ENCODE measurements at regions of chrX and their contacts with region 1.

Region 1: DNA sequence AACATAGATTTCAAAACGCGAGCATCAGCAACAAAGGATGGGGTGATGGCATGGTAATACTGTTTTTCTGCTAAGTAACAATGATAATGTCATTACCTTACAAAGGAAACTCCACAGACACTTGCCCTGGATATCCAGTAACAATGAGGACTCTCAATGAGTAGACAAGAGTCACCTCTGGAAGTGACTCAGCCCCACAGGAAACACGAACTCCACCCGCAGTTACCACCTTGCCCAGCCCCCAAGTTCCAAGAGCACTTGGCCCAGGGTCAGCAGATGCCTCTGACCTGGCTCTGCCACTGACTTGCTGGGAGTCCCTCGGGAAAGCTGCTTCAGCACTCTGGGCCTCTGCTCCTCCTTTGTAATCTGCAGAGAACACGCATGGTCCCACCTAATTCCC is 110.3 kb upstream of the MAP3K15 start:
- DNase-seq: peak; percentile 46 to 65
- H3K4me3 ChIP-seq: no peak overlapping the region
- H3K27ac ChIP-seq: peak overlapping the region; percentile 89
- H3K4me1 ChIP-seq: peaks cover 63% of the 10 kb centered on the region
- H3K27me3 ChIP-seq: no peaks in the 10 kb centered on the region
- CTCF ChIP-seq: no peak

Region 2: DNA sequence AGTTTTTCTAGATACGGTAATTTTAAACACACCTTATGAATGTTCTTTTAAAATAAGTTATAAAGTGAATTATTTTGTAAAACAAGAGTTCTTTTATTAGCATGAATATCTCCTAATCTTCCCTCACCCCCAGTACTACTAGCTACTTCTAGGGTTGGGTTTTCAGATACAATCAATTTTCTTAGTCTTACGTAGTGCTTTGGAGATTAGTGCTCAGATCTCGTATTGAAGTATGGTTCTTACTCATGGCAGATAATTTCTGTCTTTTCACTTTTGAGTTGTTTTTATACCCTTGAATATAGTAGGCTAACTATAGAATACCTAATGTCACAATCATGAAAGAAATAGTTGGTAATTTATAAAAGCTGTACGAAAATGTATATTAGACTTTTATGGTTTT is 1157.0 kb before region 1 on chrX:
- CTCF ChIA-PET with region 1: no interaction called
- POLR2A ChIA-PET with region 1: no interaction called
- intact Hi-C with region 1: no loop called
- DNase-seq: no peak
- H3K4me3 ChIP-seq: no peak overlapping the region
- H3K27ac ChIP-seq: no peak overlapping the region
- H3K4me1 ChIP-seq: peaks cover 7% of the 10 kb centered on the region
- H3K27me3 ChIP-seq: no peaks in the 10 kb centered on the region
- CTCF ChIP-seq: no peak

Region 3: GRCh38 chrX:19602866-19603622 is 22.6 kb before region 1 on chrX:
- CTCF ChIA-PET with region 1: no interaction called
- POLR2A ChIA-PET with region 1: interaction called, 3 read pairs
- intact Hi-C with region 1: loop called (anchors 2 kb)
- DNase-seq: peak; percentile 63 to 83
- H3K4me3 ChIP-seq: no peak overlapping the region
- H3K27ac ChIP-seq: peak overlapping the region; percentile 69
- H3K4me1 ChIP-seq: peaks cover 11% of the 10 kb centered on the region
- H3K27me3 ChIP-seq: no peaks in the 10 kb centered on the region
- CTCF ChIP-seq: no peak

Region 4: DNA sequence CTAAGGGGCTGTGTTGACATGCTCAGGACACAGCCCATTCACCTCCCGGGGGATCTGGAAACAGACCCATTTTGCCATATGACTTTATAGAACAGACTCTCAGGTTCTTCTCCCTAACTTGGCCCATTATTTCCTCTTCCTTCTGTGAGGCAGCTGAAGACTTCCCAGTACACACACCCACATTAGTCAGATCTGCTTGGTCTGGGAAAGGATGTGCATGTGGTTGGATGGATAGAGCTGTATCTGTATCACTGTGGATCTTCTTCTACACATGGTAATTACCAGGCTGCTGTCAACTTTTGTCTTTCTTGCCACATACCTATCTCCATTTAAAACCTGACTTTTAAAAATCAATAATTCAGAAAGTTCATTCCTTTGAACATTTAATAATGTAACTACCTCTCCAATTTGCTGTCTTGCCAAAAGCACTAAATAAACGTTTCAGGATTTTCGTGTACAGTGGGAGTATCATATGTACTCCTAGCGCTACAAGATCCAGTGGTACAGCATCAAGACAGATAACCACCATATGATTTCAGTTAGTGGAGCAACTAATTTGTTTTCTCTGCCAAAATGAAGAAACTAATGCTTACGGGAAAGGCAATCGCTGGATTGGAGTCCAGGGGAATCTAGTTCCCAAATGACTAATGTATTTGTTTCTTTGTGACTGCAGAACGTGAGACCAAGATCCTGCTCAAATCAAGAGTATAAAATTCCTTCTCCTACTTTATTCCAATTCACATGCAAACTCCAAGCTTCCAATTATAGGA is 23.8 kb after region 1 on chrX:
- CTCF ChIA-PET with region 1: no interaction called
- POLR2A ChIA-PET with region 1: no interaction called
- intact Hi-C with region 1: no loop called
- DNase-seq: no peak
- H3K4me3 ChIP-seq: no peak overlapping the region
- H3K27ac ChIP-seq: no peak overlapping the region
- H3K4me1 ChIP-seq: no peaks in the 10 kb centered on the region
- H3K27me3 ChIP-seq: no peaks in the 10 kb centered on the region
- CTCF ChIP-seq: no peak

Region 5: DNA sequence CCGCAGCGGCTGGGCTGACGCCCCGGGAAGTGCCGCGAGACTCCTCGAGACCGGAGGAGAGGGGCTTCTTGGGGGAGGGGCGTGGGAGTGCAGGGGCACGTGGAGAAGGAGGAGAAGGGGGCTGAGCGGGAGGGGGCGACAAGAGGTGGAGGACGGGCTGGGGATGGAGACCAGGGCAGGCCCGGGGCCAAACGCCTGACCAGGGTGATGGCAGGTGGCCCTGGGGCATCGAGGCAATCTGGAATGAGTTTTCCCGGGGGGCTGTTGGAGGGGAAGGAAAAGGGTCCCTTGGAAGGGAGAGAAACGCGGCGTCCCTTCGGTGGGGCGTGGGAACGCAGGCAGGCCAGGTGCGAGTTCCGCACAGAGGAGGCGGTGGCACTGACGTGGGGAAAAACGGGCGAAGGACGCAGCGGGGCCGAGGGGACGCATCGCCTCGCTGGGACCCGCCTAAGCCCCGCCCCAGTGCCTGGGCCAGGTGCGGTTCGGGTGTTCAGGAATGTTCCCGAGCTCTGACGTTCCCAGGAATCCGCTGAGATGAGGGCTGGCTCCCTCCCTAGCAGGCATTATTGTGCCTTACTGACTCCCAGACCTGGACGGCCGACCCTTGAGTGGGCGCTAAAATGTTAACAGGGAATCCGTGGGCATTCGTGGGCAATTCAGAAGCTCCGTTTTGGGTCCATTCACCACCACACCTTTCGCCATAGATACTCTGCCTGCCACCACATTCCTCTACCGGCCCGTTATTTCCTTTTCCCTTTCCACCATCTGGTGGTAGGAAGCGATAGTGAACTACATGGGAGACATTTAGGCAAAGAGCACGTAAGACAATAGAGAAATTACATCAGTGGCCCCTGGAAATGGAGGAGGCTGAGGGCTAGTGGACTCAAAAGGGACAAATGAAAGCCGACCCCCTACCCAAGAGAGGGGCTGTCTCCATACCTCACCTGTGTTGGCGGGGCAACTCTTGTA is 262.6 kb after region 1 on chrX:
- CTCF ChIA-PET with region 1: no interaction called
- POLR2A ChIA-PET with region 1: no interaction called
- intact Hi-C with region 1: no loop called
- DNase-seq: peak; percentile 53 to 70
- H3K4me3 ChIP-seq: peak overlapping the region; percentile 65
- H3K27ac ChIP-seq: peak overlapping the region; percentile 77
- H3K4me1 ChIP-seq: peaks cover 33% of the 10 kb centered on the region
- H3K27me3 ChIP-seq: no peaks in the 10 kb centered on the region
- CTCF ChIP-seq: peak; percentile 60

Measured in PC-9 (cell line).